ENCODE measurements at regions of chr15 and their contacts with region 1.

Region 1: DNA sequence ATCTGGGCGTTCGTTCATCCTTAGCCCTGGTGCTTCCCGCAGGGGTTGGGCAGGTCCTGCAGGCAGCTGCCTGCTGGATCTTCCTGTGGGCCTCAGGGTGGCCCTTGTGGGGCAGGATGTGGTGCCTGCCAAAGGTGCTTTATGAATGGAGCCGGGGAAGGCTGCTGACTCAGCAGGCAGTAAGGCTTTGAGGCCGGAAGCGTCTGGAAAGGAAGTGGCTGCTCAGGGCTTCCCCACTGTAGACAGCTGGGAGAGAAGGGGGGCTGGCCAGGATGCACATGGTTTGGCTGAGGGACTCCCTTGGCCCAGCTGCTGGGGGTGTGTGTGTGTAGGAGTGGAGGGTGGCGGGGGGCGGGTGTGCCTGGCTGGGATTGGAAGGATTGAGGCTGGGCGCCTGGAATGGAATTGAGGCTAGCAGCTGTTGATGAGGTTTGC is 12.9 kb downstream of the CD276 start:
- DNase-seq: peak; percentile 95
- ATAC-seq: peak; percentile 88
- H3K4me3 ChIP-seq: no peak overlapping the region
- H3K27ac ChIP-seq: peak overlapping the region; percentile 36
- H3K4me1 ChIP-seq: peaks cover 21% of the 10 kb centered on the region
- H3K27me3 ChIP-seq: no peaks in the 10 kb centered on the region
- CTCF ChIP-seq: no peak
- POLR2A ChIP-seq: no peak
- RAD21 ChIP-seq: 0 out of 2 replicates have a peak, but pooled peaks have one; percentile 19

Region 2: DNA sequence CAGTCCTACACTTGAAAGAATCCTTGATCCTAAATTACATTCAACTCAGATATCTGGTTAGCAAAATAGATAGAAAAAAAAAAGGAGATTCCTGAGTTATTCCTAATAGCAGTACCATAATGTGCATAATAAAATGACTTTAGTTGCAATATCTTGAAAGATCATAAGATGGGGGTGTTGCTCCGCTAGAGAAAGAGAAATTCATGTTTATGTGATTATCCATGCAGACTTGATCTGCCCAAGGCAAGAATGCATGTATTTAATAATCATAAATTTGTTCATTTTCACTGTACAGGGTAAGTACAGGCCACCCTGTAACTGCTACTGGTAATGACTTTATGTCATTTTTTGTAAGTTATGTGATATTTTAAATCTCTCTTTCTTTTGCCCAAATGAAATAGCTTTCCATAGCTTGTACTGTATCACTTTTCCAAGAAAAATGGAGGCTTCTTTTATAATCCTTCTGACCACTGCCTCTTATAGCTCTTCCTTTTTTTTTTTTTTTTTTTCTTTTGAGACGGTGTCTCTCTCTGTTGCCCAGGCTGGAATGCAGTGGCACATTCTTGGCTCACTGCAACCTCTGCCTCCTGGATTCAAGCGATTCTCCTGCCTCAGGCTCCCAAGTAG is 412.8 kb before region 1 on chr15:
- CTCF ChIA-PET with region 1: no interaction called
- POLR2A ChIA-PET with region 1: no interaction called
- dilution Hi-C with region 1: no loop called
- in situ Hi-C with region 1: no loop called
- intact Hi-C with region 1: loop called (anchors 5 kb)
- DNase-seq: peak; percentile 43
- ATAC-seq: peak; percentile 86
- H3K4me3 ChIP-seq: no peak overlapping the region
- H3K27ac ChIP-seq: no peak overlapping the region
- H3K4me1 ChIP-seq: no peaks in the 10 kb centered on the region
- H3K27me3 ChIP-seq: no peaks in the 10 kb centered on the region
- CTCF ChIP-seq: peak; percentile 54
- POLR2A ChIP-seq: no peak
- RAD21 ChIP-seq: peak; percentile 57

Region 3: DNA sequence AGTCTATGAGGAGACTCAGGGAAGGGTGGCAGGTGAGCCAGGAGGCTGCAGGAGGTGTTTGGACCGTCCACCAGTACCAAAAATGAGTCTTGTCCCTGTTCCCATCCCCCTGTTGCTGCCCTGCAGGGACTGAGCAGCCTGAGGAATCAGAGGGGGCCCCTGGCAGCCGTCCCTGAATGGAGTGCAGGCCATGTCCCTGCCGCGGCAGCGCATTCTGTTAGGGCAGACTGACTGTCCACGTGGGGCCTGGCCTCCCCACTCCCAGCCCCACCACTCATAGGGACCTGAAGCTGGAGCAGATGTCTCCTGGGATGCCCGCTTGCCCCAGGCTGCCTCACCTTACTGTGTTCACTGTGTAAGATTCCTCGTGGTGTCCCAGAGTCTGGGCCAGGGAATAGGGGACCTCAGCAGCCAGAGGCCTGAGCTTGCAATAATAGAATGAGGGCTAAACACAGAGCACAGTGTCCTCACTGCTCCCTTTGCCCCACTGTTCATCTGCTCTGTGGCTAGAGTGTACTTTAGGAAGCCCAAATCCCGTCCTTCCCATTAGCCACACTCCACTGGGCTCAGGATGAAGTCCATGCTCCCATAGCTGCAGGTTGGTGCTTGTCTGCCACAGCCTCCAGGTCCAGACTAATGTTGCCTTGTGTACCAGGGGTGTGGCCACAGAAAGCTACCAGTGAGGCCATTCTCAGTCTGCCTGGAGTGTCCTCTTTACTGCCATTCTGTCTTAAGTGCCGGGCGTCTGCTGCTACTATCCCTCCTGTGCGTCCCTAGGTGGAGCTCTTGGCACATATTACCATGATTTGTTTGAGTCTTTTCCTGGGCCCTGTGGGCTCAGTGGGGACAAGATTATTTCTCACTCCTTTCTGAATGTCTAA is 391.5 kb before region 1 on chr15:
- CTCF ChIA-PET with region 1: no interaction called
- POLR2A ChIA-PET with region 1: no interaction called
- dilution Hi-C with region 1: no loop called
- in situ Hi-C with region 1: loop called (anchors 10 kb)
- intact Hi-C with region 1: loop called (anchors 2 kb)
- DNase-seq: peak; percentile 65
- ATAC-seq: peak; percentile 97
- H3K4me3 ChIP-seq: no peak overlapping the region
- H3K27ac ChIP-seq: no peak overlapping the region
- H3K4me1 ChIP-seq: no peaks in the 10 kb centered on the region
- H3K27me3 ChIP-seq: no peaks in the 10 kb centered on the region
- CTCF ChIP-seq: peak; percentile 66
- POLR2A ChIP-seq: no peak
- RAD21 ChIP-seq: peak; percentile 67

Region 4: GRCh38 chr15:73560501-73561117 is 136.4 kb before region 1 on chr15:
- CTCF ChIA-PET with region 1: no interaction called
- POLR2A ChIA-PET with region 1: no interaction called
- dilution Hi-C with region 1: no loop called
- in situ Hi-C with region 1: loop called (anchors 5 kb)
- intact Hi-C with region 1: loop called (anchors 2 kb)
- DNase-seq: peak; percentile 84
- ATAC-seq: peak; percentile 70
- H3K4me3 ChIP-seq: no peak overlapping the region
- H3K27ac ChIP-seq: no peak overlapping the region
- H3K4me1 ChIP-seq: peaks cover 13% of the 10 kb centered on the region
- H3K27me3 ChIP-seq: no peaks in the 10 kb centered on the region
- CTCF ChIP-seq: peak; percentile 69
- POLR2A ChIP-seq: no peak
- RAD21 ChIP-seq: peak; percentile 76

Region 5: DNA sequence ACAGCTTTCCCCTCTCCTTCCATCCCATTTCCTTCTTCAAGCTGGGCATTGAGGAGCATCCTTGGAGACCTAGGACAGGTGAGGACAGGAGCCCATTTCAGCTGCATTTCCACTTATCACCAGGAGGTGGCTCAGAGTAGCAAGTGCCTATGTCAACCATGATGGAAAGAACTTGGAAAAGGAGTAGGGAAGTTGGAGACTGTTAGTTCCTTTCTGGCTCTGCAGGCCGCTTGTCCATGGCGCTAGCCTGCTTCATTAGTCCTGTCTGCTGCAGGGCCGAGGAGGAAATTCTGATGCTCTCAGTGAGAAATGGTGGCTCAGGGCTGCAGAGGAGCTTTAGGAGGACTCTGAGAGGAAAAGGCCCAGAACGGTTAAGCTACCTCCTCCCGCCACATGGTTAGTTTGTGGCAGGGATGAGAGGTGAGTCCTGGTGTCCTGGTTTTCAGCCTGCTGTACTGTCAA is 19.9 kb before region 1 on chr15:
- CTCF ChIA-PET with region 1: interaction called, 8 read pairs
- POLR2A ChIA-PET with region 1: no interaction called
- dilution Hi-C with region 1: no loop called
- in situ Hi-C with region 1: no loop called
- intact Hi-C with region 1: loop called (anchors 2 kb)
- DNase-seq: peak; percentile 70
- ATAC-seq: peak; percentile 94
- H3K4me3 ChIP-seq: no peak overlapping the region
- H3K27ac ChIP-seq: no peak overlapping the region
- H3K4me1 ChIP-seq: no peaks in the 10 kb centered on the region
- H3K27me3 ChIP-seq: peaks cover 35% of the 10 kb centered on the region
- CTCF ChIP-seq: peak; percentile 75
- POLR2A ChIP-seq: no peak
- RAD21 ChIP-seq: peak; percentile 80

Region 6: GRCh38 chr15:73683777-73684580 is 13.1 kb before region 1 on chr15 and contains the start of gene CD276:
- CTCF ChIA-PET with region 1: interaction called, 10 read pairs
- POLR2A ChIA-PET with region 1: no interaction called
- dilution Hi-C with region 1: no loop called
- in situ Hi-C with region 1: no loop called
- intact Hi-C with region 1: no loop called
- DNase-seq: peak; percentile 64
- ATAC-seq: peak; percentile 89
- H3K4me3 ChIP-seq: peak within 1 kb of the TSS; percentile 98
- H3K27ac ChIP-seq: peak within 1 kb of the TSS; percentile 87
- H3K4me1 ChIP-seq: peaks cover 32% of the 10 kb centered on the region
- H3K27me3 ChIP-seq: no peaks in the 10 kb centered on the region
- CTCF ChIP-seq: no peak
- POLR2A ChIP-seq: peak; percentile 47
- RAD21 ChIP-seq: peak; percentile 30
- total RNA-seq, gene CD276: 30.8 and 37.5 TPM in 2 replicates